Caco-2 (cell line): ENCODE measurements at regions of chr13 and their contacts with region 1.

Region 1: DNA sequence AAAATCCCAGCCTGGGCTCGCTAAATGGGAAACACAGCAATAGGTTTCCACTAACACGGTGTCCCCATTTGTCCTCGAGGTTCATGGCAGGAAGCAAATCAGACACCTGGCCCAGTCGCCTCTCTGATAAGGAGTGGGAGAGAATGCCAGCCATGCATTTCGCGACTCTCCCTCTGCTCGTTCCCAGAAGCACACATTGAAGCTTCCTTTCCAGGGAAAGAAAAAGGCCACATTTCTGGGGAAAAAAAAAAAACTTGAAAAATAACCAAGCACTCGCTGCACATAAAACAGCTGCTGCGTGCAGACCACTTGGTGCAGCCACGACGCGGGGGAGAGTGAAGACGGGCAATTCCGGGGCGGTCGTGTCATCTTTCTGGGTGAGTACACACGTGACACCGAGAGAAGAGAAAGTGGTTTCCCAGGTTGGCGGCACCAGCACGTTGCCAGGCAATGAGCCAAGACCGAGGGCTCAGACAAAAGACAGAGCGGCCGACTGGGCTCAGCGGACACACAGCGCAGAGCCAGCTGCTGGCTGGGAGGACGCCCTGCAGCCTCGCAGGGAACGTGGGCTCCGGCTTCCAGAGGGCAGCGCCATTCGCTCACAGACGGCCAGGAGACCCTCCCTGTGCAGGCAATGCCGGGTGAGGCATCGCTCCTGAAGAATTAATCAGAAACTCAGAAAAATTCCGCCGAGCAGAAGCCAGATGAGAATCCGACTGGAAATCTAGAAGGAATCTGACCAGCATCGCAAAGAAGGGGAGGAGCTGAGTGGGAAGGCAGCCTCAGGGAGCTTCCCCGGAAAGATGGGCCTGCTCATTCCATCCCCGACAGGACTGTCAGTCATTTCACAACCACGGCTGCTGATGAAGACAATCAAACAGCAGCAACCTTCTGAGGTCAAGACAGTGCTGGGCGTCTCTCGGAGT is 83.2 kb upstream of the IRS2 start:
- DNase-seq: no peak
- H3K4me3 ChIP-seq: no peak overlapping the region
- H3K4me3 Mint-ChIP-seq: no peak overlapping the region
- H3K27ac Mint-ChIP-seq: no peak overlapping the region
- H3K4me1 ChIP-seq: peaks cover 20% of the 10 kb centered on the region
- H3K4me1 Mint-ChIP-seq: peaks cover 40% of the 10 kb centered on the region
- H3K27me3 ChIP-seq: no peaks in the 10 kb centered on the region
- H3K27me3 Mint-ChIP-seq: no peaks in the 10 kb centered on the region
- CTCF ChIP-seq: no peak

Region 2: DNA sequence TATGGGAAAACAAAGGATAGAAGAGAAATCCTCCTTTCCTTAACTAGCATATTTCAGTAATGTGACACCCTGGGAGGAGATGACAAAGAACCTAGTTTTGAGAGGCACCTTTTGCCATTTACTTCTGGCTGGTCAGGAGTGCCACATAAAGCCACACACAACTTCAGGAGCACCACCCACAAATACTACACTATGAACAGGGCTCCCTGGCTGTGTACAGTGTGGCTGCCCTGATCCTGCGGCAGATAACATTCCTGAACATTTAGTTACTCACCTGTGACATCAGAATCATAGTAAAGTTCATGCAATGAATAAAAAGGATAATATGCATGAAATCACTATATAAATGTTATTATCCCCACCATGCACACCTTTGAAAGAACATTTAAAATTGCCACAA is 65.7 kb before region 1 on chr13:
- CTCF ChIA-PET with region 1: no interaction called
- POLR2A ChIA-PET with region 1: no interaction called
- intact Hi-C with region 1: loop called (anchors 5 kb)
- DNase-seq: no peak
- H3K4me3 ChIP-seq: no peak overlapping the region
- H3K4me3 Mint-ChIP-seq: no peak overlapping the region
- H3K27ac Mint-ChIP-seq: no peak overlapping the region
- H3K4me1 ChIP-seq: peaks cover 14% of the 10 kb centered on the region
- H3K4me1 Mint-ChIP-seq: peaks cover 14% of the 10 kb centered on the region
- H3K27me3 ChIP-seq: no peaks in the 10 kb centered on the region
- H3K27me3 Mint-ChIP-seq: peaks cover 4% of the 10 kb centered on the region
- CTCF ChIP-seq: no peak

Region 3: DNA sequence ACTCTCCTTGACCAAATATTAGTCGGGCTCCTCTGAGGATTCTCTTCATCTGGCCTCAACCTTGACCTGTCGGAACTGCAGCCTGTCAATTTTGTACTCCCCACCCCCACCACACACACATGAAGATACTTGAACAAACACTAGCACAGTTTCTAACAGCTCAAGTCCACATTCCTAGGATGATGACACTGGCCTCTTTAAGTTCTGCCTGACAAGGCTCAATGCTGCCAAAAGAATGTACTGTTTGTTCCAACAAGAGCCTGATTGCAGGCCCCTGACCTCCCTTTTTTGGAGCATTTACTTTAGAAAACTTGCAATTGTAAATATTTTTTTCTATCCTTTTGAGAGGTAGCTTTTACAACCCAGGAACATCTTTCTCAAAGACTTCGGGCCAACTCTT is 86.0 kb after region 1 on chr13:
- CTCF ChIA-PET with region 1: no interaction called
- POLR2A ChIA-PET with region 1: no interaction called
- intact Hi-C with region 1: loop called (anchors 1 kb)
- DNase-seq: peak; percentile 46 to 69
- H3K4me3 ChIP-seq: no peak overlapping the region
- H3K4me3 Mint-ChIP-seq: peak overlapping the region; percentile 26
- H3K27ac Mint-ChIP-seq: peak overlapping the region; percentile 85
- H3K4me1 ChIP-seq: peaks cover 14% of the 10 kb centered on the region
- H3K4me1 Mint-ChIP-seq: peaks cover 8% of the 10 kb centered on the region
- H3K27me3 ChIP-seq: no peaks in the 10 kb centered on the region
- H3K27me3 Mint-ChIP-seq: no peaks in the 10 kb centered on the region
- CTCF ChIP-seq: no peak

Region 4: GRCh38 chr13:110187641-110188161 is 318.1 kb after region 1 on chr13:
- CTCF ChIA-PET with region 1: no interaction called
- POLR2A ChIA-PET with region 1: no interaction called
- intact Hi-C with region 1: loop called (anchors 5 kb)
- DNase-seq: no peak
- H3K4me3 ChIP-seq: no peak overlapping the region
- H3K4me3 Mint-ChIP-seq: no peak overlapping the region
- H3K27ac Mint-ChIP-seq: peak overlapping the region; percentile 89
- H3K4me1 ChIP-seq: peaks cover 37% of the 10 kb centered on the region
- H3K4me1 Mint-ChIP-seq: peaks cover 26% of the 10 kb centered on the region
- H3K27me3 ChIP-seq: no peaks in the 10 kb centered on the region
- H3K27me3 Mint-ChIP-seq: no peaks in the 10 kb centered on the region
- CTCF ChIP-seq: no peak